Activated CD4-positive, alpha-beta T cell treated with anti-CD3 and anti-CD28 coated beads for 36 hours (primary cell): ENCODE measurements at regions of chr1 and their contacts with region 1.

Region 1: DNA sequence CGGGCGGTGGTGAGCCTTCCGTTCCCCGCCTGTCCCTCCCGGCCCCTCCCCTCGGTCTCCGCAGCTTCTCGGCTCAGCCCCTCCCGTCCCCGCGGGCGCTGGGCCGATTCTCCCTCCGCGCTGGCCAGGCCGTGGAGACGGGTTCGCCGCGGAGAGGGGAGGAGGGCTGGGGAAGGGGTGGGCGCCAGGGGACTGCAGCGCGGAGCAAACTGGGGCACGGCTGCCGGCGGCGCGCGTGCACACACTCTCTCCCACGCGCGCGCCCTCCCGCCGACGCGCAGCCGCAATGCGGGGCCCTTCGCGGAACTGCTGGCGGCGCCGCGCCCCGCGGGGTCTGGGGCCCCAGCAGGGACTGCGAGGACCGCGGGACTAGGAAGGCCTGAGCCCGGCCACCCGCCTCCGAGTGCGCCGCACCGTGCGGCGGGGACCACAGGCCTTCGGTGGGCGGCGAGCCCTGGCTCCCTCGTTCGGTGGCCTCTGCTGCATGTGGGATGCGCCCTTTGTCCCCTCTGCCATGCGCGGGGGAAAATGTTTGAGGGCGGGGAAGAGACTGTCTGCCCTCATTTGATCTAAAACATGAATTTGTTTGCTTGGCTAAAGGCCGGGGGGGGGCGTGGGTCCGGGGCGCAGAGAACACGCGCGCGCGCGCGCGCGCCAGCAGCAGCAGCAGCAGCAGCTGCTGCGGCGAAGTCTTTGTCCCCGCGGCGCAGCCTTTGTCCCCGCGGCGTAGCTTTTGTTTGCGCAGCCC is 90.7 kb upstream of the VAMP3 start:
- DNase-seq: peak; percentile 59
- ATAC-seq: peak; percentile 67
- H3K4me3 Mint-ChIP-seq: peak overlapping the region; percentile 62
- H3K27ac Mint-ChIP-seq: no peak overlapping the region
- H3K4me1 Mint-ChIP-seq: no peaks in the 10 kb centered on the region
- H3K27me3 Mint-ChIP-seq: no peaks in the 10 kb centered on the region

Region 2: GRCh38 chr1:7630378-7630777 is 50.0 kb before region 1 on chr1:
- CTCF ChIA-PET with region 1: no interaction called
- POLR2A ChIA-PET with region 1: no interaction called
- intact Hi-C with region 1: no loop called
- DNase-seq: no peak
- ATAC-seq: no peak
- H3K4me3 Mint-ChIP-seq: no peak overlapping the region
- H3K27ac Mint-ChIP-seq: no peak overlapping the region
- H3K4me1 Mint-ChIP-seq: no peaks in the 10 kb centered on the region
- H3K27me3 Mint-ChIP-seq: peaks cover 8% of the 10 kb centered on the region

Region 3: GRCh38 chr1:7667625-7668218 is 12.7 kb before region 1 on chr1:
- CTCF ChIA-PET with region 1: interaction called, 32 read pairs
- POLR2A ChIA-PET with region 1: interaction called, 3 read pairs
- intact Hi-C with region 1: no loop called
- DNase-seq: peak; percentile 90
- ATAC-seq: peak; percentile 83
- H3K4me3 Mint-ChIP-seq: no peak overlapping the region
- H3K27ac Mint-ChIP-seq: no peak overlapping the region
- H3K4me1 Mint-ChIP-seq: no peaks in the 10 kb centered on the region
- H3K27me3 Mint-ChIP-seq: peaks cover 3% of the 10 kb centered on the region

Region 4: GRCh38 chr1:8314346-8315280 is 634.2 kb after region 1 on chr1:
- CTCF ChIA-PET with region 1: no interaction called
- POLR2A ChIA-PET with region 1: no interaction called
- intact Hi-C with region 1: no loop called
- DNase-seq: peak; percentile 73
- ATAC-seq: peak; percentile 51
- H3K4me3 Mint-ChIP-seq: no peak overlapping the region
- H3K27ac Mint-ChIP-seq: no peak overlapping the region
- H3K4me1 Mint-ChIP-seq: peaks cover 12% of the 10 kb centered on the region
- H3K27me3 Mint-ChIP-seq: peaks cover 27% of the 10 kb centered on the region